ENCODE measurements at regions of chr15 and their contacts with region 1.

Region 1: GRCh38 chr15:72231066-72231846 is at the start of gene PKM:
- DNase-seq: peak; percentile 98
- H3K4me3 Mint-ChIP-seq: peak within 1 kb of the TSS; percentile 100
- H3K27ac Mint-ChIP-seq: peak within 1 kb of the TSS; percentile 99
- H3K4me1 Mint-ChIP-seq: peaks cover 25% of the 10 kb centered on the region
- H3K27me3 Mint-ChIP-seq: no peaks in the 10 kb centered on the region
- total RNA-seq, gene PKM: 1,794 to 1,797 TPM

Region 2: GRCh38 chr15:70545526-70545925 is 1685.7 kb before region 1 on chr15:
- CTCF ChIA-PET with region 1: no interaction called
- intact Hi-C with region 1: loop called (anchors 5 kb)
- DNase-seq: no peak
- H3K4me3 Mint-ChIP-seq: no peak overlapping the region
- H3K27ac Mint-ChIP-seq: peak overlapping the region; percentile 91
- H3K4me1 Mint-ChIP-seq: peaks cover 60% of the 10 kb centered on the region
- H3K27me3 Mint-ChIP-seq: no peaks in the 10 kb centered on the region

Region 3: DNA sequence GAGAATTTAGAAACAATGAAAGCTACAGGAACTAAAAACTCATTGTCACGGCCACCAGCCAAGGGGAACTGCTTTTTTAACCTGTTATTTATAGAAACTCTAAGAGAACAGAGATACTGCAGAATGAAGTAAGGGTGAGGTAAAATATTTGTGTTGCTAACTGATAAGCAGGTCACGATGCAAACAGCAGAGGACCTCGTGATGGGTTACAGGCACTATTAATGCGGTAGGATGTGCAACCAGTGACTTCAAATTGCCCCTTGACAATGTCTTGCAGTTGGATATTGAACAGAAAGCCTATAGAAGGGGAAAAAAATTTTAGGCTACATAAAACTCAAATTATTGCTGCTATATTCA is 1062.8 kb before region 1 on chr15:
- CTCF ChIA-PET with region 1: no interaction called
- intact Hi-C with region 1: no loop called
- DNase-seq: no peak
- H3K4me3 Mint-ChIP-seq: no peak overlapping the region
- H3K27ac Mint-ChIP-seq: no peak overlapping the region
- H3K4me1 Mint-ChIP-seq: no peaks in the 10 kb centered on the region
- H3K27me3 Mint-ChIP-seq: peaks cover 32% of the 10 kb centered on the region

Region 4: GRCh38 chr15:72199711-72200212 is 31.5 kb before region 1 on chr15:
- CTCF ChIA-PET with region 1: interaction called, 7 read pairs
- intact Hi-C with region 1: loop called (anchors 1 kb)
- DNase-seq: peak; percentile 84
- H3K4me3 Mint-ChIP-seq: no peak overlapping the region
- H3K27ac Mint-ChIP-seq: no peak overlapping the region
- H3K4me1 Mint-ChIP-seq: peaks cover 29% of the 10 kb centered on the region
- H3K27me3 Mint-ChIP-seq: peaks cover 4% of the 10 kb centered on the region

Region 5: DNA sequence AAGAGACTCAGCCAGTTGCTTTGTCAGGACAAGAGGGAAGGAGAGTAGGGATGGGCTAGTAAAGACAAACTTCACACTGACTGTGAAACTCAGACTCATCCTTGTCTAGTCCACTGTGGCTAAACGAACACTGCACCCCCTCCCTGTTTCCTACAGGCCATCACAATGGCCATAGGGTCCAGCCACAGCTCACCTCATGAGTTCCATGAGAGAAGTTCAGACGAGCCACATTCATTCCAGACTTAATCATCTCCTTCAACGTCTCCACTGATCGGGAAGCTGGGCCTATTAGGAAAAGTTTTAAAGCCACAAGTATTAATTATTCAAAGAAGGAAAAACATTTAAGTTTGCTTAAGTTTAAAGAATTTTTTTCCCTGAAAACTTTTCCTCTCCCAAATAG is 14.0 kb before region 1 on chr15:
- CTCF ChIA-PET with region 1: interaction called, 22 read pairs
- intact Hi-C with region 1: no loop called
- DNase-seq: no peak
- H3K4me3 Mint-ChIP-seq: no peak overlapping the region
- H3K27ac Mint-ChIP-seq: peak overlapping the region; percentile 75
- H3K4me1 Mint-ChIP-seq: peaks cover 35% of the 10 kb centered on the region
- H3K27me3 Mint-ChIP-seq: no peaks in the 10 kb centered on the region

Region 6: DNA sequence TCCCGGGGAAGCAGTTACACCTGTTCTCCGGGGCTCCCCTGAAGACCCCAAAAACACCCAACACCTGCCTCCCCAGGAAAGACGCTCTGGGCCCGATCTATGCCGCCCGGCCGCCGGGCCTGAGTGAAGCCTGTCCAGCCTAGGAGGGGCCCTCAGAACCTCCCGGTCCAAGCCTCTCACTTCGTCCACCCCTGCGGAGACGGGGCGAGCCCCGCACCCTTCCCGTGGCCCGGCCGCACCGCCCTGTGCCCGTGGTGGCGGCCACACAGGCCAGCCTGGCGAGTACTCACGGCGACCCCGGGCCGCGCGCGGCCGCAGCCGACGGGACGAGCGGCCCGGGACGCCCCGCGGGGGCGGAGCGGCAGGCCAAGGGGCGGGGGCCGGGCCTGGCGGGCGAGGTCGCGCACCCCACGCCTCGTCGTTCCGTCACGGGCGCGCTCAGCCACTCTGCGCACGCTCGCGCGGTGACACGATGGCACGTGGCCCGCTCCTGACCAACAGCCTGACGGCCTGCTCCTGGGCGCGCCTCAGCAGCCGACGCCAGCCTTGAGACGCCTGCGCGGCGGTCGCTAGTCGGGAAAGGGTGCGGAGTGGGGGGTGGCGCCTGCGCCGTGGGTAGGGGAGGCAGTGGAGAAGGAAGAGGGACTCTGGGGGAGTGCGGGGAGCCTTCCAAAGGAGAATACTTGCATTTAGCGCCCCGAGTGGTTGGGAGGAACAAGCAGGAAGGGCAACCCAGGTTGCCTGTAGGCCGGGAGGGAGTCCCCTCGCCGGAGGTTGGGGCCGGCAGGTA is 41.2 kb after region 1 on chr15 and contains the start of gene PARP6:
- CTCF ChIA-PET with region 1: interaction called, 9 read pairs
- intact Hi-C with region 1: loop called (anchors 1 kb)
- DNase-seq: peak; percentile 98
- H3K4me3 Mint-ChIP-seq: peak within 1 kb of the TSS; percentile 87
- H3K27ac Mint-ChIP-seq: peak within 1 kb of the TSS; percentile 91
- H3K4me1 Mint-ChIP-seq: peaks cover 36% of the 10 kb centered on the region
- H3K27me3 Mint-ChIP-seq: no peaks in the 10 kb centered on the region
- total RNA-seq, gene PARP6: 38.8 to 44.7 TPM

Region 7: DNA sequence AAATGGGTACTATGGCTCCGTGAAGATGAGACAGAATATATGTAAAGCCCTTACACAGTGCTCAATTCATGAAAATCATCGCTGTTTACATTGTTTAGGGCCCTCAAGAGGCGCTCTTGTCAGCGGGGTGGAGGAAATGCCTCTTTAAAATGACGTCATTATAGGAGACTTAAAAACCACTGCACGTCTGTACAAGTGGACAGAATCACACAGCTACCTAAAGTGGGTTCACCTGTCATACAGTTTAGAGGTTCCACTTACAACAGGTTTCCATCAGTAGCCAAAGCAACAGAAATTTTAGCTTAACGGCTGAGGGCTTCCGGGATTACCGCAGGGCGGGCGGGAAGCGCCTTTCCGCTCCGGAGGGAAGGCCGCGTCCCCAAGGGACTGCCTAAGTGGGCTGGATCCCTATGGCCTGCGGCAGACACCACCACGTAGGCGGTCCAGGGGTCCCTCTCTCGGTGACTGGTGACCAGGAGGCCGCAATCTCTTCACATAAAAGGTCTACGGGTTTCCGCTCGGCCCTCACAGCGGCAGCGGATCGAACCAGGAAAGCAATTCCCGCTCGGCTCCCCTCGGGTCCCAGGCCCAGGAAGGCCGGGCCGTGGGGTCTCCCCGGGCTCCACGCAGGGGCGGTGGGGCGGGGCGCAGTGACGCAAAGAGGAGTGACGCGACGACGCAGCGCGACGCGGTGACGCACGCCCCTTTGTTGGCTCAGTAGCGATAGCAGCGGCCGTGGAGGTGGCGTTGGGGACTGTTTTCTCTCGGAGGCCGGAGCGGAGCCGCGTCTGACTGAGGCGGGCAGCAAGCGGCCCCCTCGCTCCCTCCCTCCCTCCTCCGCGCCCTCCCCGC is 242.6 kb after region 1 on chr15 and contains the start of gene ARIH1:
- CTCF ChIA-PET with region 1: no interaction called
- intact Hi-C with region 1: loop called (anchors 1 kb)
- DNase-seq: peak; percentile 94
- H3K4me3 Mint-ChIP-seq: peak within 1 kb of the TSS; percentile 98
- H3K27ac Mint-ChIP-seq: peak within 1 kb of the TSS; percentile 98
- H3K4me1 Mint-ChIP-seq: peaks cover 34% of the 10 kb centered on the region
- H3K27me3 Mint-ChIP-seq: no peaks in the 10 kb centered on the region
- total RNA-seq, gene ARIH1: 174 to 183 TPM

Region 8: DNA sequence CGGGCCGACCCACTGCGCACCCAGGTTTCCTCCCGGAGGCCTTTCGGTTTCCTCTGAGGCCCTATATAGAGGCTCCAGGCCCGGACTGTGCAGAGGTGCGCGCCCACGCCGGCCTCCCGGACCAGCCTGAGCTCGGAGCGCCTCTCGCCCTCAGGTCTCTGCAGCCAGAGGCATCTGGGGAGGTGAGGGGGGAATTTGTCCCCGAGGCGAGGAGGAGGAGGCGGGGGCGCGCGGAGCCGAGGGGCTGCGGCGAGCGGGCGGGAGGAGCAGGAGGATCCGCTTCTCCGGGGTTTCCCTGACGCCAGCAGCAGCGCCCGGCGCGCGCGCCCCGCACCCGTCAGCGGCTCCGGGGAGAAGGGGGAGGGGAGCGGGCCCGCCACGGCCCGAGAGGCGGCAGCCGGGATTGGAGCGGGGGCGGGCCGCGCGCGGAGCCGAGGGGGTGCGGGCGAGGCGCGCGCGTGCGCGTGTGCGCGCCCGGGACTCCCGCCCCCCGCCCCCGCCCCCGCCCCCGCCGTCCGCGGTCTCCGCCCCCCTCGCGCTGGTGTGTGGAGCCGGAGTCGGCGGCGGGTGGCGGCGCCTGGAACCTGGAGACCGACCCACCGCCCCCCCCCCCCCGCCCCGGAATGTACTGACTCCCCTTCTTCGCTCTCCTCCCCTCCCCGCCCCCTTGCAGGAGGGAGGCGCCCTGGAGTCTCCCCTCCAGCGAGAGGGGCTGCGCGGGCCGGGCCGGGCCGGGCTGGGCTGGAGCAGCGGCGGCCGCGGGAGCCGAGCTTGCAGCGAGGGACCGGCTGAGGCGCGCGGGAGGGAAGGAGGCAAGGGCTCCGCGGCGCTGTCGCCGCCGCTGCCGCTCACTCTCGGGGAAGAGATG is 820.8 kb after region 1 on chr15 and contains the start of gene NEO1:
- CTCF ChIA-PET with region 1: no interaction called
- intact Hi-C with region 1: loop called (anchors 2 kb)
- DNase-seq: peak; percentile 81
- H3K4me3 Mint-ChIP-seq: peak within 1 kb of the TSS; percentile 77
- H3K27ac Mint-ChIP-seq: no peak within 1 kb of the TSS
- H3K4me1 Mint-ChIP-seq: peaks cover 6% of the 10 kb centered on the region
- H3K27me3 Mint-ChIP-seq: peaks cover 8% of the 10 kb centered on the region
- total RNA-seq, gene NEO1: 4.3 to 4.4 TPM